ENCODE measurements at regions of chr6 and their contacts with region 1.

Region 1: DNA sequence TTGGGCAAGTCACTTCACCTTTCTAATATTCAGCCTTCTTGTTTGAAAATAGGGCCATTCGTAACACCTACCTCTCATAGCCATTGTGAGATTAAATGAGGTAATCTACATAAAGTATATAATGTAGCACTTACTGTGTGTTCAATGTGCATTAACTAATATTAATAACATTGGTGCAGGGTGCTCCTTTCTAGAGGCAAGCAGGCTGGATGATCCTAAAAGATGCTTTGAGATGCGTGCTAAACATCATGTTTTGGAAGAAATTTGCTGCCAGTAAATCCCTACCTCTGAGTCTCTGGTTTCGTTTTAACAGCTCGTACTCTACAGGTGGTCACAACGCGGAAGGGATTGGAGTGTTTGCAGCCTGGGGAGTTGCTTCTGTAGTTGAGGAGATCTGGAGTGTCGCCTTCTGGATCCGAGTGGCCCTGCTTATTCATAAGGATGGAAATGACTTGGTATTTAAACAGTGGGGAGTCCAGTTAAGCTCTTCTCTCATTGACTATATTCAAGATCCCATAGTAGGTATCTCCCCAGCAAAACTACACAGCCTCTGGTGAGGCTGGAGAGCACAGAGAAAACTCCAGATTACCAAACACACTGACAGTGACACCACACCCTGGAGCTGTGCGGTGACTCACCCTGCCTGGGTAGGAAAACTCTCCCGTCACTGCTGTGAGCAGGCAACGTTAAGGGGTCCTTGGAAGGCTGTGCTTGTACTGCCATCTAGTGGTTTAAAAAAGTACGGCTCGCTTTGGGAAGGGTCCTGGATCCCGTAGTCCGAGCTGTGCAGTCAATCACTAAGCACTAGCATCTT is 107.9 kb downstream of the MAP3K7 start:
- DNase-seq: peak; percentile 93
- ATAC-seq: peak; percentile 93
- H3K4me3 Mint-ChIP-seq: no peak overlapping the region
- H3K27ac Mint-ChIP-seq: peak overlapping the region; percentile 85
- H3K4me1 Mint-ChIP-seq: peaks cover 61% of the 10 kb centered on the region
- H3K27me3 Mint-ChIP-seq: no peaks in the 10 kb centered on the region

Region 2: DNA sequence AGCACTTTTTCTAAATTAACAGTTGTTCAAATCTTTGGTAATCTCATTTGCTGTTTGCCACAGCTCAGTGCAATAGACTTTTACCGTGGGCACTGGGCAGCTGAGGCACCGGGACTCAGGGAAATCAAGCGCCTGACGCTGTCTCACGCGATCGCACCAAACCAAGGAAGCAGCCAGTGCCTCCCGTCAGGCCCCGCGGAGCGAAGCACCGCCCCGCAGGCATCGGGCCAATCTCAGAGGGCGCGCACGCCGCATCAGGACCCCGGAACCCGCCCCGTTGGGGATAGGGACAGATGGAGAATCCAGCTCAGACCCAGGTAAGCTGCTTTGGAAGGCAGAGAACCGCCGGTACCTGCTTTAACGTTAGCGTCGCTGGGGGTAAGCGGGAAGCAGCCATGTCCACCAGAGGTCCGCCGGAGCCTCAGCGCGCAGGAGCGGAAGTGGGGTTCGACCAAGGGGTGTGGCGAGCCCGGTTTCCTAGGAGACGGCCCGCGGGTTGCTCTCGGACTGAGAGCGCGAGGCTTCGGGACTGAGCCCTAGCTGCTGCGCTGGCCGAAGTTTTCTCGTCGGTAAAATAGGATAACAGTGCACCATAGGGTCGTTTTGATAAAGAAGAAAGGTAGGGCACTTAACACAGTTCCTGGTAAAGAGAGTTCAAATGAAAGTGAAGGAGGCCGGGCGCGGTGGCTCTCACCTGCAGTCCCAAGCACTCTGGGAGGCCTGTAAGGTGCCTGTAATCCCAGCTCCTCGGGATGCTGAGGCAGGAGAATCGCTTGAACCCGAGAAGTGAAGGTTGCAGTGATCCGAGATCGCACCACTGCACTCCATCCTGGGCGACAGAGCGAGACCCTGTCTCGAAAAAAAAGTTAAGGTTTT is 840.4 kb before region 1 on chr6 and contains the start of gene LYRM2:
- CTCF ChIA-PET with region 1: no interaction called
- POLR2A ChIA-PET with region 1: no interaction called
- intact Hi-C with region 1: loop called in 1 of 2 experiments (anchors 5 kb)
- DNase-seq: peak; percentile 96
- ATAC-seq: peak; percentile 97
- H3K4me3 Mint-ChIP-seq: peak within 1 kb of the TSS; percentile 86
- H3K27ac Mint-ChIP-seq: peak within 1 kb of the TSS; percentile 98
- H3K4me1 Mint-ChIP-seq: peaks cover 22% of the 10 kb centered on the region
- H3K27me3 Mint-ChIP-seq: no peaks in the 10 kb centered on the region
- total RNA-seq, gene LYRM2: 24.5 to 27.9 TPM

Region 3: DNA sequence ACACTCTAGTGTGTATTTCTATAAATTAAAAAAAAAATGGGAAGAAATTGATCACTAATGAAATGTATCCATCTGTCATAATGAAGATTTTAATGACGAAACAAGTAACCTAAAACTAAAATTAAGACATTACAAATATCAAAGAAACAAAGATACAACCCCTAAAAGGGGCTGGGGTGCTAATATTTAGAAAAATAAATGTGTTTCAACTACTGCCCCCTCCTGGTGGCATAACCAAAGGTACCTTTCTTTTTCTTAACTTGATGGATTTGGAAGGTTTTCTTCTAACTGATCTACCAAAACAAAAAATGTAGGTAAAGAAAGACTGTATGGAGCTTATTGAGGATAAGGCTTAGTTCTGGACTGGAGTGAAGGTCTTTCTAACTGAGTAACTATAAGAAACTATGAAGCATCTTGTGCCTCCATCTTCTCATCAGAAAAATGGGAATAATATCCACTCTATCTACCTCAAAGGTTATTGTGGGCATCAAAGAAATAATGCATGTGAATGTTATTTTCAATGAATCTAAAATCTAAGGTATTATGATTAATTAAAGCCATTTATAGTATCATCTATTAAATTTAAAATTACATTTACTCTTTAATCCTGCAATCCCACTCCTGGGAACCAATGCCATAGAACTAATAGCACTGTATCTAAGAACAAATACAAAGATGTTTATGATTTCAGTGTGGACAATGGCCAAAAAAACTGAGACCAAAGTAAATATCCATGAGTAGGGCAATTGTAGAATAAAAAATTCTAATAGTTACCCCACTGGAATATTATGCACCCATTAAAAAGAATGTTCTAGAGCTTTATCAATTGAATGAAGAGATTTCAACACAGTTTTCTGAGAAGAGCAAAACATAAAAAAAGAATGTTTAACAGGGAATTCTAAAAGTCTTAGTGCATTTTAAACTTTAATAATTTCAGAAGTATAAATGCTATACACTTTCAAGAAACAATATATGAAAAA is 299.5 kb before region 1 on chr6:
- CTCF ChIA-PET with region 1: interaction called, 6 read pairs
- POLR2A ChIA-PET with region 1: no interaction called
- intact Hi-C with region 1: loop called in 1 of 2 experiments (anchors 5 kb)
- DNase-seq: peak; percentile 46
- ATAC-seq: no peak
- H3K4me3 Mint-ChIP-seq: no peak overlapping the region
- H3K27ac Mint-ChIP-seq: no peak overlapping the region
- H3K4me1 Mint-ChIP-seq: peaks cover 79% of the 10 kb centered on the region
- H3K27me3 Mint-ChIP-seq: no peaks in the 10 kb centered on the region

Region 4: DNA sequence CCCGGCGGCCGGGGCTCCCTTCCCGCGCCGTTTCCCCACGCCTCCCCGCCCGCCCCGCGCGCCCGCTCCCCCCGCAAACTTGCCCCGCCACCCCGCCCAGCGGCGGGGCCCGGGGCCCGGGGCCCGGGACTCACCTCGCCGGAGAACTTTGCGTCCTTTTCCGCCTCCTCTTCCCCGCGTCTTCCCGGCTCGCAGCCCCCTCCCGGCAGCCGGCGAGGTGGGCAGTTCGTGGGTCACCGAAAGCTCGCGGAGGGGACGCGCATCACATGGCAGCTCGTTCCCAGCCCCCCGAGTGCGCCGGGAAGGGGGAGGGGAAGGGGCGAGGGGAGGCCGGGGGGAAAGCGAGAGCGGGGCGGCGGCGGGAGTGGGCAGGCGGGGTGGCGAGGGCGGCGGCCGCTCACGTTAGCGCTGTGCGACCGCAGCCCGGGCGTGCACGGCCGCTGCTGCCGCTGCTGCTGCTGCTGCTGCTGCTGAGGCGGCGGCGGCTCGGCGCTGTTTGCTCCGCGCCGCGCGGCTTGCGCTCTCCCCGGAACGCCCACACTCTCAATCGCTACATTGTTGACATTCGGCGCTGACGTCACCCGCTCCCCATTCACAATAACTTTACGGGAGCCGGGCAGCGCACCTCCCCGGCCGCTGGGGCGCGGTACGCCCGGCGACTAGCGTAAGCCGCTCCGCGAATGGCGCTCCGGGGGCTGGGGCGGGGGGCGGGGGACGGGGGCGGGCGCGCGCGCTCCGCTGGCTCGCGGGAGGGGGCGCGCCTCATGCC is 182.5 kb before region 1 on chr6 and contains the start of gene BACH2:
- CTCF ChIA-PET with region 1: interaction called, 8 read pairs
- POLR2A ChIA-PET with region 1: interaction called, 4 read pairs
- intact Hi-C with region 1: loop called in 1 of 2 experiments (anchors 2 kb)
- DNase-seq: peak; percentile 99
- ATAC-seq: peak; percentile 66
- H3K4me3 Mint-ChIP-seq: peak within 1 kb of the TSS; percentile 86
- H3K27ac Mint-ChIP-seq: peak within 1 kb of the TSS; percentile 100
- H3K4me1 Mint-ChIP-seq: peaks cover 49% of the 10 kb centered on the region
- H3K27me3 Mint-ChIP-seq: peaks cover 7% of the 10 kb centered on the region
- total RNA-seq, gene BACH2: 74.7 to 87.3 TPM

Region 5: DNA sequence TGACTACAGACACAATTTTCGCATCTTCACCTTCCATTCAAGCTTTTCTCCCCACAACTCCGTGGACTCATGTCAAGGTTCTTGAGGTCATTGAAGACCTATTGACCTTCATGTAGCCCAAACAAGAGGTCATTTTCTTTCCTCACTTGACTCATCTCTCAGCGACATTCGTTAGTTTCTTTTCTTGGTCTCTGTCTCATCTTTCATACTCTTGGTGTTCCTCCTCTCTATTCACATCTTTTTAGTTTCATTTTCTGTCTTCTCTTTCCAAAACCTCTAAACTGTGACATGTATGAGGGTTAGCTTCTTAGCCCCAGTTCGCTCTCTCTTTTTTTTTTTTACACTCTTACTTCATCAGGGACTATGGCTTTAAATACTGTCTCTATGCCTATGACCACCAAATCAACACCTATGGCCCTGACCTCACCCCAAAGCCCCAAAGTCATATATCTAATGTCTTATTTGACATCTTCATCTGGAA is 53.8 kb before region 1 on chr6:
- CTCF ChIA-PET with region 1: interaction called, 29 read pairs
- POLR2A ChIA-PET with region 1: interaction called, 7 read pairs
- intact Hi-C with region 1: loop called in 1 of 2 experiments (anchors 2 kb)
- DNase-seq: peak; percentile 34
- ATAC-seq: peak; percentile 93
- H3K4me3 Mint-ChIP-seq: peak overlapping the region; percentile 49
- H3K27ac Mint-ChIP-seq: peak overlapping the region; percentile 94
- H3K4me1 Mint-ChIP-seq: peaks cover 34% of the 10 kb centered on the region
- H3K27me3 Mint-ChIP-seq: no peaks in the 10 kb centered on the region

Region 6: GRCh38 chr6:90490030-90490716 is 11.2 kb after region 1 on chr6:
- CTCF ChIA-PET with region 1: interaction called, 16 read pairs
- POLR2A ChIA-PET with region 1: no interaction called
- intact Hi-C with region 1: no loop called
- DNase-seq: no peak
- ATAC-seq: no peak
- H3K4me3 Mint-ChIP-seq: no peak overlapping the region
- H3K27ac Mint-ChIP-seq: no peak overlapping the region
- H3K4me1 Mint-ChIP-seq: peaks cover 16% of the 10 kb centered on the region
- H3K27me3 Mint-ChIP-seq: peaks cover 9% of the 10 kb centered on the region